B cell (primary cell): ENCODE measurements at regions of chr5 and their contacts with region 1.

Region 1: GRCh38 chr5:179623003-179623880 is at the start of gene HNRNPH1:
- DNase-seq: peak; percentile 99
- ATAC-seq: peak; percentile 74
- H3K4me3 ChIP-seq: peak within 1 kb of the TSS; percentile 78 to 96 (median 93)
- H3K4me3 Mint-ChIP-seq: peak within 1 kb of the TSS; percentile 98
- H3K27ac ChIP-seq: peak within 1 kb of the TSS; percentile 98 to 99
- H3K27ac Mint-ChIP-seq: peak within 1 kb of the TSS; percentile 99
- H3K4me1 ChIP-seq: peaks cover 39 to 45% of the 10 kb centered on the region in 2 donors
- H3K4me1 Mint-ChIP-seq: peaks cover 48% of the 10 kb centered on the region
- H3K27me3 ChIP-seq: no peaks in the 10 kb centered on the region
- H3K27me3 Mint-ChIP-seq: no peaks in the 10 kb centered on the region
- CTCF ChIP-seq: no peak
- total RNA-seq, gene HNRNPH1: 1,364 and 1,412 TPM in 2 replicates

Region 2: GRCh38 chr5:179023528-179024430 is 599.5 kb before region 1 on chr5 and contains the start of gene ZNF879:
- CTCF ChIA-PET with region 1: no interaction called
- POLR2A ChIA-PET with region 1: no interaction called
- intact Hi-C with region 1: loop called (anchors 2 kb)
- DNase-seq: peak; percentile 97
- ATAC-seq: peak; percentile 94
- H3K4me3 ChIP-seq: peak within 1 kb of the TSS; percentile 53 to 74 (median 67)
- H3K4me3 Mint-ChIP-seq: peak within 1 kb of the TSS; percentile 97
- H3K27ac ChIP-seq: peak within 1 kb of the TSS in 1 of 2 donors; percentile 76
- H3K27ac Mint-ChIP-seq: peak within 1 kb of the TSS; percentile 91
- H3K4me1 ChIP-seq: peaks cover 7 to 18% of the 10 kb centered on the region in 2 donors
- H3K4me1 Mint-ChIP-seq: peaks cover 15% of the 10 kb centered on the region
- H3K27me3 ChIP-seq: no peaks in the 10 kb centered on the region
- H3K27me3 Mint-ChIP-seq: no peaks in the 10 kb centered on the region
- CTCF ChIP-seq: no peak
- total RNA-seq, gene ZNF879: 13.2 and 14.7 TPM in 2 replicates

Region 3: DNA sequence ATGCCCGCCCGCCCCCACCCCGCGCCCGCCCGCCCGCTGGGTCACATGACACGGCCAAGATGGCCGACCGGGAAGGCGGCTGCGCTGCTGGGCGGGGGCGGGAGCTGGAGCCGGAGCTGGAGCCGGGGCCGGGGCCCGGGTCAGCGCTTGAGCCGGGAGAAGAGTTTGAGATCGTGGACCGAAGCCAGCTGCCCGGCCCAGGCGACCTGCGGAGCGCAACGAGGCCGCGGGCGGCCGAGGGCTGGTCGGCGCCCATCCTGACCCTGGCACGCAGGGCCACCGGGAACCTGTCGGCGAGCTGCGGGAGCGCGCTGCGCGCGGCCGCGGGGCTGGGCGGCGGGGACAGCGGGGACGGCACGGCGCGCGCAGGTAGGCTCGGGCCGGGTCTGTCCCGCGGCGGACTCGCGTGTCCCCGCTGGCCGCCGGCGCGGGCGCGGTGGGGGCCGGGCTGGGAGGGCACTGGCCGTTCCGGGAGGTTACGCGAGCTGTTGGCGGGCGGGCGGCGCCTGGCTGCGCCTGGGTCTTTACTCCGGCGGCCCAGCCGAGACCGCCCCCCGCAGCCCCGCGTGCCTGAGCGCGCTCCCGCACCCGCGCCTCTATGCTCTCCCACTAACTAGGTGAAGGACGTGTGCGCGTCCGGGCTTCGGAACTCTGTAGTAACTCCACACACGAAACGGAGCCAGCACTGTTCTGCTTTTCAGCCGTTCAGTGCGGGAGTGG is 72.6 kb before region 1 on chr5 and contains the start of gene RUFY1:
- CTCF ChIA-PET with region 1: interaction called, 3 read pairs
- POLR2A ChIA-PET with region 1: interaction called, 24 read pairs
- intact Hi-C with region 1: loop called (anchors 2 kb)
- DNase-seq: peak; percentile 92
- ATAC-seq: peak; percentile 74
- H3K4me3 ChIP-seq: peak within 1 kb of the TSS; percentile 60 to 92 (median 76)
- H3K4me3 Mint-ChIP-seq: peak within 1 kb of the TSS; percentile 99
- H3K27ac ChIP-seq: peak within 1 kb of the TSS; percentile 90 to 92
- H3K27ac Mint-ChIP-seq: peak within 1 kb of the TSS; percentile 100
- H3K4me1 ChIP-seq: peaks cover 25 to 31% of the 10 kb centered on the region in 2 donors
- H3K4me1 Mint-ChIP-seq: peaks cover 50% of the 10 kb centered on the region
- H3K27me3 ChIP-seq: no peaks in the 10 kb centered on the region
- H3K27me3 Mint-ChIP-seq: no peaks in the 10 kb centered on the region
- CTCF ChIP-seq: no peak
- total RNA-seq, gene RUFY1: 99.8 and 109 TPM in 2 replicates

Region 4: DNA sequence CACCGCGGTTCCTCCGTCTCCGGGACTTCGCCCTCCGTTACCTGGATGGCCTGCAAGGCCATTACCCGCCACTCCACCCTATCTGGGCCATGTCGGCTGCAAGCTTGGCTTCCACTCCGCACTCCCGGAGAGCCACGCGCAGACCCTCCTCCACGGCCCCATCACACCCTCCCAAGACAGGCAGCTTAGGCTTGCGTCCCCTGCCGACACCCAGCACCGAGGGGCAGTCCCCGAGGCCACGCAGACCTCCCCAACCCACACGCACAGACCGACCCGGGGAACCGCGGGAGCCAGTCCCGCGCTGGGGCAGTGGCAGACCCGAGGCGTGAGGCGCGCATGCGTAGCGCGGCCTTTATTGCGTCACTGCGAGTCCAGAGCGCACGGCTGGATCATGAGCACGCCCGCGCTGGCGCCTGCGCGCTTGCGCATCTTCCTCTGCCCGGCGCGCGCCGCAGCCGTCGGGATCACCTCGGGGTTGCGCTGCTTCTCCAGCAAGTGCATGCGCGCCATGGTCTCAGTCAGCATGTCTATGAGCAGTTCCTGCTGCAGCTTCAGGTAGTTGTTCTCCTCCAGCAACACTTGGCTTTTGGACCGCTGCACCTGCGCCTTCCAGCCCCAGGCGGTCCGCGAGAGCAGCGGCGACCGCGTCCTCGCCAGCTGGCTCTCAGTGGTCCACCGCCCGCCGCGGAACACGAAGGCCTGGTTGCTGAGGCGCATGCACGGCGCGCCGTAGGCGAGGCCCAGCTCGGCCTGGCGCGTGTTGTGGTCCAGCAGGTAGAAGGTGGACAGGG is 55.2 kb after region 1 on chr5:
- CTCF ChIA-PET with region 1: interaction called, 3 read pairs
- POLR2A ChIA-PET with region 1: interaction called, 9 read pairs
- intact Hi-C with region 1: loop called (anchors 1 kb)
- DNase-seq: peak; percentile 97
- ATAC-seq: peak; percentile 91
- H3K4me3 ChIP-seq: peak overlapping the region; percentile 48 to 90 (median 75)
- H3K4me3 Mint-ChIP-seq: peak overlapping the region; percentile 98
- H3K27ac ChIP-seq: peak overlapping the region; percentile 74 to 86
- H3K27ac Mint-ChIP-seq: peak overlapping the region; percentile 97
- H3K4me1 ChIP-seq: peaks cover 7 to 19% of the 10 kb centered on the region in 2 donors
- H3K4me1 Mint-ChIP-seq: peaks cover 25% of the 10 kb centered on the region
- H3K27me3 ChIP-seq: no peaks in the 10 kb centered on the region
- H3K27me3 Mint-ChIP-seq: no peaks in the 10 kb centered on the region
- CTCF ChIP-seq: peak; percentile 26

Region 5: DNA sequence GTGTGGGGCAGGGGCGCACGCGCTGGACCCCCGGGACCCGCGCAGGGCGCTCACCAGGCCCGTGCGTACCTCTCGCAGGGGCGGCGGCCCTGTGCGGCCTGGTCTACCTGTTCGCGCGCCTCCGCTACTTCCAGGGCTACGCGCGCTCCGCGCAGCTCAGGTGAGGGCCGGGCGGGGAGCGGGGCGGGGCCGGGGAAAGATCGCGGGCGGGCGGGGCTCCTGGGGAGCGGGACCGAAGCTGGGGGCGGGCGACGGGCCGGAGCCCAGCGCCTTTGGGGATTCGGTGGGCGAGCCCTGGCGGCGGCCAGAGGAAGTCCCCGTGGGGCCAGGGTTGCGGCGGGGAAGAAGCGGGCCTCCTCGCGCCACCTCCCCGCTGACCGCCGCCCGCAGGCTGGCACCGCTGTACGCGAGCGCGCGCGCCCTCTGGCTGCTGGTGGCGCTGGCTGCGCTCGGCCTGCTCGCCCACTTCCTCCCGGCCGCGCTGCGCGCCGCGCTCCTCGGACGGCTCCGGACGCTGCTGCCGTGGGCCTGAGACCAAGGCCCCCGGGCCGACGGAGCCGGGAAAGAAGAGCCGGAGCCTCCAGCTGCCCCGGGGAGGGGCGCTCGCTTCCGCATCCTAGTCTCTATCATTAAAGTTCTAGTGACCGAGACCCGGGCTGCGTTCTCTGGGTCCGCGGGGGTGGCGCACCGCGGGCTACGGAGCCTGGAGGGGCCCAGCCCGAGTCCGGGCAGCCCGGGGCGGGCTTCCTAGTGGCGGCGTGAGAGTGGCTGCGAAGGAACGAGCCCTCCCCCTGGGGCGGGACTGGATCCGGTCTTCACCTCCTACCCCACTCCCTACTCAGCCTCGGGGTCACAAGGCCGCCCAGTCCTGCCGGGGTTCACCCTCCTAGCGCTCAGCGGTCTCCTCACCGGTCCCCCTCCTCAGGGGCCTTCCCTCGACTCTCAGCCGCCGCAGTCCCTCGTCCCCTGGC is 172.9 kb after region 1 on chr5:
- CTCF ChIA-PET with region 1: interaction called, 4 read pairs
- POLR2A ChIA-PET with region 1: interaction called, 5 read pairs
- intact Hi-C with region 1: loop called (anchors 2 kb)
- DNase-seq: peak; percentile 86
- ATAC-seq: peak; percentile 79
- H3K4me3 ChIP-seq: peak overlapping the region; percentile 5 to 68 (median 63)
- H3K4me3 Mint-ChIP-seq: peak overlapping the region; percentile 70
- H3K27ac ChIP-seq: peak overlapping the region; percentile 41 to 66
- H3K27ac Mint-ChIP-seq: peak overlapping the region; percentile 70
- H3K4me1 ChIP-seq: peaks cover 28 to 32% of the 10 kb centered on the region in 2 donors
- H3K4me1 Mint-ChIP-seq: peaks cover 29% of the 10 kb centered on the region
- H3K27me3 ChIP-seq: no peaks in the 10 kb centered on the region
- H3K27me3 Mint-ChIP-seq: no peaks in the 10 kb centered on the region
- CTCF ChIP-seq: peak; percentile 75